ENCODE measurements at regions of chr2 and their contacts with region 1.

Region 1: DNA sequence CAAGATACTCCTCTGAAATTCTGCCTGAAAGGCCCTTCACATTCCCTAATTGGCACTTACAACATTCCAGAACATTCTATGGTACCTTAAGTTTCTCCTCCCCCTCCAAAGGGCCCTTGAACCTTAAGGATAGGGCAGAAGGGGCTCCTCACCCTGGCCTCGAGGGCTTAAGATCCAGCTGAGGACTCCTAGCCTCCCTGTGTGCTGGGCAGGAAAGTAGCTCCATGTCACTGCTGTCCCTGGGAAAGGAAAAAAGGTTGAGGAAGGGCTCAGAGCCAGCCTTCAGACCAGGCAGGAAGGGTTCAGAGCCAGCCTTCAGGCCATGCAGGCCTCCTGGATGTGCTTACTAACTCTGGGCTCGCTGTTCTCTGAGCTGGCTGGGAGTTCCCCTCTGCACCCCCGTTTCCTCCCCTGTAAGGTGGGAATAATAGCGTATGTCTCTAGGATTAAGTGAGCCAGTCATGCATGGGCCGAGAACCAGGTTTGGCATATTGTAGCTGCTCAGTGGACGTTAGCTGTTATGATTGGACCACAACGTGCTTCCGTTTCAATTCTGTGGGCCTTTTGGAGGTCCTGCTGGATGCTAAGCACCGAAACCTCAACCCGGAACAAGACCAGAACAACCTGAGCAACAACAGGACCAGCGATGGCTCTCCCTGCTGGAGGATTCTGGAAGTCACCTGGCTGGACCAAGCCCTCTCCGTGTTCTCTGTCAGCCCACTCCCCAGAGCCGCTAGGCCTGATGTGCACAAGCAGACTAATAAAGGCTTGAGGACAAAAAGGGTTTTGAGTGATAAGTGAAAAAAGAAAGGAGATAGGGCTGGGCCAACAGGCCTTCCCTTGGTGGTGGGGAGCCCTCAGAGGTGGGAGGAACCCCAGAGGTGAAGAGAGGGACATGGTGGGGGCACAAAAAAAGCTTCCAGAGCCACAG is 1.0 kb upstream of the B3GNT7 start:
- DNase-seq: peak in 1 of 2 experiments; percentile 78
- H3K4me3 ChIP-seq: peak overlapping the region in 2 of 4 experiments; percentile 46 to 74; a peak in 5 of 8 replicates
- H3K27ac ChIP-seq: no peak overlapping the region
- H3K4me1 ChIP-seq: peaks cover 3 to 37% (median 20%) of the 10 kb centered on the region in 4 experiments
- H3K27me3 ChIP-seq: no peaks in the 10 kb centered on the region
- CTCF ChIP-seq: peak in 2 of 3 experiments; percentile 67 to 78; a peak in 3 of 4 replicates
- EP300 ChIP-seq: no peak
- POLR2A ChIP-seq: no peak
- RAD21 ChIP-seq: peak; percentile 58 to 75

Region 2: DNA sequence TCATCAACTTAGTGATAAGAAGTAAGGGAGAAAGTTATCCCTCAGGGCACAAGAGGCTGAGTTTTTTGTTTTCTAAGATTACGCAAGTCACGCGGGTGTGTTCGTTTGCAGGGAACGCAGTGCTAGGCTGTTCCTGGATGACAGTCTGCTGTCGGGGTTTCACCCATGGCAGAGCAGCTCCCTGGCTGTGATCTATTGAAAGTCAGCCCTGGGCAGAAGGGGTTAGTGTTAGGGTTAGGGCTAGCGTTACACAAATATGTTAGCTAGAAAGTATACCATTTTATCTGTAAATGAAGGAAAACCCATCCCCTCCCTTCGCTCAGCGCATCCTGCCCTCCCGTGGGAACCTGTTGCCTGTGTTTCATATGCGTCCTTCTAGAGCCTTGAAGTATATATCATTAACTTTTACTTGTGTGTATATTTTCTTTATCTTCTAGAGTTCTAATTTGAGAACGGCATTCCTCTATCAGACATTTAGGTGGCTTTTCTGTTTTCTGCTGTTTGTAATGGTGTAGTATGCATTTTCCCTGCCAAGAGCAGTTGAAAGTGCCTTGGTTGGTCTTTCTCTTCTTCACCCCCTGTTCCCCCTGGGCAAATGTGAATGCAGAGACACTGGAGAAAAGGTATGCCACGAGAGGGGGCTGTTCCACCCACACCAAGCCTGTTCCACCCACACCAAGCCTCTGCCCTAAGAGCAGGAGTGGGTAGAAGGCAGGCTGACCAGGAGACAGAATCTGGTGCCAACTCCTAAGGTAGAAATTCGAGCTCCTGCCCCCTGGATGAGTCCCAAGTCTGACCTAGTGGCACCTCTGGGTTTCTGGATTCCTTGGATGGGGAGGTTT is 149.0 kb before region 1 on chr2:
- CTCF ChIA-PET with region 1: interaction called, 10 read pairs
- POLR2A ChIA-PET with region 1: interaction called, 3 read pairs
- DNase-seq: no peak
- H3K4me3 ChIP-seq: no peak overlapping the region
- H3K27ac ChIP-seq: no peak overlapping the region
- H3K4me1 ChIP-seq: peaks cover 0 to 3% (median 0%) of the 10 kb centered on the region in 4 experiments; a peak in 2 of 7 replicates
- H3K27me3 ChIP-seq: no peaks in the 10 kb centered on the region
- CTCF ChIP-seq: peak in 2 of 3 experiments; percentile 8 to 21; a peak in 2 of 4 replicates
- EP300 ChIP-seq: no peak
- POLR2A ChIP-seq: no peak
- RAD21 ChIP-seq: peak in 1 of 2 experiments; percentile 17; a peak in 1 of 4 replicates

Region 3: GRCh38 chr2:231378026-231378722 is 16.3 kb before region 1 on chr2:
- CTCF ChIA-PET with region 1: interaction called, 617 read pairs
- POLR2A ChIA-PET with region 1: interaction called, 15 read pairs
- DNase-seq: no peak
- H3K4me3 ChIP-seq: no peak overlapping the region
- H3K27ac ChIP-seq: peak overlapping the region; percentile 43; the same call in 1 of the 2 replicates
- H3K4me1 ChIP-seq: peaks cover 4 to 20% (median 13%) of the 10 kb centered on the region in 4 experiments
- H3K27me3 ChIP-seq: no peaks in the 10 kb centered on the region; a peak in 2 of 7 replicates
- CTCF ChIP-seq: no peak
- EP300 ChIP-seq: no peak
- POLR2A ChIP-seq: no peak
- RAD21 ChIP-seq: no peak

Region 4: DNA sequence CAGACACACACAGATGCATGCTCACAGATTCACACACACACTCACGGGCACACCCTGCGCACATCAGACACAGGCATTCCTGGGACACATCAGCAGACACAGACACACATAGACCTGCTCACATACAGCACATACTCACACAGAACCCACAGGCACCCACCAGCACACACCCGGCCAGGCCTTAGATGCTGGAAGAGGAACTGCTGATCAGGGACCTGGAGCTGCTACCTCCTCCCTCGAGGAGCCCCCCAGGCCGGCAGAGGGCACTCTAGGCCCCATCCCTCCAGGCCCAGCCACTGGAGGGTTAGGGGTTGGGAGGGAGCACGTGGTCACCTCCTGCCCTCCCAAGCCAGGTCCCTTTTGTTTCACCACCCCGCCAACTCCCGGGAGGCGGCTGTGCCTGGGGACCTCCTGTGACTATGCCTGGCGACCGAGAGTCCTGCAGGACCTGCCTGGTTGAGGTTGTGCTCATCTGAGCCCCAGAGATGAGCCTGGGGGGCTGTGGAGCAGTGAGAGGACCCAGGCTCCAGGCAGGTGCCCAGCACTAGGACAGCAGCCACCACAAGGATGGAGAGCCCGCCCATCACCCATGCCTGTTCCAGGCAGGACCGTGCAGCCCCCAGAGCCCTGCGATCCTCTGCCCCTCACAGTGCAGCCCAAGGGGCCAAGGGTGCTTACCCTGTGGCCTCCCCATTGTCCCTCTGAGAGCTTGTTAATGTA is 292.8 kb after region 1 on chr2:
- CTCF ChIA-PET with region 1: no interaction called
- POLR2A ChIA-PET with region 1: no interaction called
- DNase-seq: peak; percentile 75 to 93
- H3K4me3 ChIP-seq: peak overlapping the region; percentile 16 to 54 (median 32); a peak in 7 of 8 replicates
- H3K27ac ChIP-seq: peak overlapping the region; percentile 46
- H3K4me1 ChIP-seq: peaks cover 4 to 42% (median 21%) of the 10 kb centered on the region in 4 experiments
- H3K27me3 ChIP-seq: no peaks in the 10 kb centered on the region
- CTCF ChIP-seq: peak in 2 of 3 experiments; percentile 79 to 92; a peak in 3 of 4 replicates
- EP300 ChIP-seq: no peak
- POLR2A ChIP-seq: peak in 1 of 2 experiments; percentile 79; a peak in 2 of 3 replicates
- RAD21 ChIP-seq: peak; percentile 61 to 67

Measured in H1 (cell line).